ENCODE measurements at regions of chr3 and their contacts with region 1.

Region 1: DNA sequence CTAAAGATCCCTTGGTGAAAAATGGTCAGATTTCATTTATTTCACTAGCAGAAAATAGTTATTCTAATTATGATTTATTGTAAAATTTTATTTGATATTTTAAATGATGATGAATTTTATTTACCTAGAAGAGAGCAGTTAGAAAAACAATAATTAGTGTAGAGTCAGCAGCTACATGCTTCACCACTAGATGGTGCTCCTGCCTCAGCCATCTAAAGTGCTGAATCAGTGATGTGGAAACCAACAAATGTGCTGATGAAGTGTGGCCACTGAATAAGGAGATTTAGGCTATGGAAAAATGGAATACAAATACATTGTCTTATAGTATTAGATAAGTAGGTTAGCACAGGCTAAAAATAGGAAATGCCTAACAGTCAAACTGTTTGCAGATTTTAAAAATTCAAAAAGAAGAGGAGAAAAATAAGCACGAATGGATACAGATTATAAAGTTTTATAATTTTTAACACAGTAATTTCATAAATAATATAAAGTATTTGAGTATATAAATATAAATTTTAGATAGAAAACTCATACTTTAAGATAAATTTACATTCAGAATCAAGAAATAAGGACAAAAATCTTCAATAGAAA is 109.8 kb downstream of the PPP2R3A start:
- DNase-seq: peak; percentile 81

Region 2: DNA sequence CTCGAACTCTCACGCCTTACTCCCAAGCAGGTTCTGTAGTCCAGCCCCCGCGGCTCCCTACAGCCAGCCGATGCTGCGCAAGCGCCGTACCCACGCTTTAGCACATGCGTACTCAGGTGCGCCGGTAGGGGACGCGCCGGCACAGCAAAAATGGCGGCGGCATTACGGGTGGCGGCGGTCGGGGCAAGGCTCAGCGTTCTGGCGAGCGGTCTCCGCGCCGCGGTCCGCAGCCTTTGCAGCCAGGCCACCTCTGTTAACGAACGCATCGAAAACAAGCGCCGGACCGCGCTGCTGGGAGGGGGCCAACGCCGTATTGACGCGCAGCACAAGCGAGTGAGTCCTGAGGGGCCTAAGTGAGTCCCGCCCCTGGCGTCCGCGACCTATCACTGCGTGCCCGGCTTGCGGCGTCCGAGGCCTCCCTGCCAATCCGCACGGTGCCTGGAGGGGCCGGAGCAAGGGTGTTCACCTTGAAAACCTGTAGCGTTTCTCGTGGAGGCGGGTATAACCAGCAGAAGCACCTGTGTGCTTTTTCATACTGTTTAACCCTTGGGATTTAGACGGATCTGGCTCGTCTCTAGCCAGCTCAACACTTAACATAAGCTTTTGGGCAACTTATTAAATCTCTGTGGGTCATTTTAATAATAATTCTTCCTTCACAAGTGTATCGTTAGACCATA is 175.1 kb after region 1 on chr3 and contains the start of gene PCCB:
- intact Hi-C with region 1: loop called (anchors 2 kb)
- DNase-seq: peak; percentile 97
- total RNA-seq, gene PCCB: 91.3 TPM

Region 3: GRCh38 chr3:136385457-136385856 is 310.1 kb after region 1 on chr3:
- intact Hi-C with region 1: loop called (anchors 10 kb)
- DNase-seq: no peak